Dorsolateral prefrontal cortex (tissue), 120 donors: ENCODE measurements at regions of chr17 and their contacts with region 1.

Region 1: GRCh38 chr17:80082403-80083135 is 18.8 kb upstream of the GAA start:
- DNase-seq: peak in 5 of 10 donors; percentile 46 to 66 (median 56)
- H3K4me3 ChIP-seq: peak overlapping the region in 28 of 59 donors; percentile 2 to 43 (median 20)
- H3K27ac ChIP-seq: peak overlapping the region in 1 of 59 donors; percentile 48
- H3K27me3 ChIP-seq: no peaks in the 10 kb centered on the region
- CTCF ChIP-seq: peak in 55 of 56 donors; percentile 47 to 86 (median 76)

Region 2: GRCh38 chr17:80008383-80008840 is 74.2 kb before region 1 on chr17:
- intact Hi-C with region 1: loop called in 1 of 2 experiments (anchors 10 kb)
- DNase-seq: peak in 9 of 10 donors; percentile 36 to 85 (median 57)
- H3K4me3 ChIP-seq: no peak overlapping the region
- H3K27ac ChIP-seq: peak overlapping the region in 1 of 59 donors; percentile 40
- H3K27me3 ChIP-seq: no peaks in the 10 kb centered on the region
- CTCF ChIP-seq: peak; percentile 69 to 93 (median 87)

Region 3: DNA sequence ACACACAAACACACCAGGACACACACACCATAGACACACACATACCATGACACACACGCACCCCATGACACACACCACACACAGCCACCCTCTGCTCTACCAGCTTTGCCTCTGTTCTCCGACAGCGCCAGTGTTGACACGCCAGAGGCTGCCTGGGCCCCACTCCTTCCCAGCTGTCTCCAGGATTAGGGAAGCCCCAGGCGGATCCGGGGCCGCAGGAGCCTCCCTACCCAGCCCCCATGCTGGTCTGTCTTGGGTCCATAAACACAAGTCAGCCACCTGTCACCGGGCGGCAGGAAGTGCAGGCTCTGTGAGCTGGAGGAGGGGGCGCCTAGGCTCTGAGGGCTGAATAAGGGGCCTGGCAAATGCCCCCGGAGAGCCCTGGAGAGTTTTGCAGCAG is 57.4 kb before region 1 on chr17:
- intact Hi-C with region 1: no loop called
- DNase-seq: no peak
- H3K4me3 ChIP-seq: no peak overlapping the region
- H3K27ac ChIP-seq: peak overlapping the region in 1 of 59 donors; percentile 75
- H3K27me3 ChIP-seq: no peaks in the 10 kb centered on the region
- CTCF ChIP-seq: no peak

Region 4: DNA sequence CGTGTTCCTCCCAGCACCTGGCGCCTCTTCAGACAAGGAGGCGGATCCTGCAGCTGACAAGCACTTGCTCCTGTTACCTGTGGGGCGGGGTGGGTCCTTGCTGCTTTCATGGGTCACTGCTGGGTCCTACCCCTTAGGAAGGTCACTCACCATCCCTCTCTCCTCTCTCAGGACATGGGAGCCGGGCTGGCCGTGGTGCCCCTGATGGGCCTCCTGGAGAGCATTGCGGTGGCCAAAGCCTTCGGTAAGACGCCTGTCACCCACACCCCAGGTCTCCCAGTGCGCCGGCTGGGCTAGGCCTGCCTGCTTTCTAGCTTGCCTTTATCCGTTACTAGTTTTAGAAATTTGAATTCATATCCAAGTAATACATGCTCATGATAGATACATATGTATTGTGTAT is 154.8 kb after region 1 on chr17:
- intact Hi-C with region 1: no loop called
- DNase-seq: no peak
- H3K4me3 ChIP-seq: no peak overlapping the region
- H3K27ac ChIP-seq: no peak overlapping the region
- H3K27me3 ChIP-seq: no peaks in the 10 kb centered on the region
- CTCF ChIP-seq: no peak